Tibial artery (tissue), 4 donors: ENCODE measurements at regions of chr1 and their contacts with region 1.

Region 1: DNA sequence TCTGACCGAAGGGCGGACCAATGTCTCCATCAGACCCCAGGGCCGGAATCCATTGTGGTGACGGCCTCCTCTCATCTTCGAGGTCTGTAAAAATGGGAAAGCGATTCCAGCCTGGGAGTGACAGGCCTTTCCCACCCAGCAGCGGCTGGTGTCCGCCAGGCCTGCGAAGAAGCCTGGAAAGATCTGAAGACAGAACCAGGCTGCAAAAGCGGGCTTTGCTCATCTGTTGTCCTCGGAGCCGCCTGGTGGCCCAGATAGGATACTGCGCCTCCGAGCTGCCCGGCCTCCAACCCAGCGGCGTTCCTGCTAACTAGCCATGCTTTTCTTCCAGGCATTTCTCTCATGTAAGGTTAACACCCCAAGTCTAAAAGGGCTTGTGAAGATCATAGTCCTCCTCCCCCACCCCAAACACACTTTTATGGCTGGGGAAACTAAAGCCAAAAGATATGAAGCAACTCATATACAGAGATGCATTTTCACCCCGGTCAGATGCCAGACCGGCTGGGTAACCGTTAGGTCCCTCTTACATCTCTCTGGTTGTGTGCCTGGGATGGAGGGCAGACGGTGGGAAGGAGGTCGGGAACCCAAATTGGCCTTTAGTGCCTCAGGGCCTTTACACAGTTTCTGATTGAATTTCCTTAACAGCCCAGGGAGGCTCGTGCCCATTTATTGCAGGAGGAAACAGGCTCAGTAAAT is 1.9 kb upstream of the DHRS3 start:
- DNase-seq: peak; percentile 92 to 94
- H3K4me3 ChIP-seq: peak overlapping the region; percentile 85 to 92
- H3K27ac ChIP-seq: peak overlapping the region; percentile 99
- H3K4me1 ChIP-seq: peaks cover 10 to 62% (median 46%) of the 10 kb centered on the region in 4 donors
- H3K27me3 ChIP-seq: no peaks in the 10 kb centered on the region
- CTCF ChIP-seq: peak; percentile 96 to 98

Region 2: DNA sequence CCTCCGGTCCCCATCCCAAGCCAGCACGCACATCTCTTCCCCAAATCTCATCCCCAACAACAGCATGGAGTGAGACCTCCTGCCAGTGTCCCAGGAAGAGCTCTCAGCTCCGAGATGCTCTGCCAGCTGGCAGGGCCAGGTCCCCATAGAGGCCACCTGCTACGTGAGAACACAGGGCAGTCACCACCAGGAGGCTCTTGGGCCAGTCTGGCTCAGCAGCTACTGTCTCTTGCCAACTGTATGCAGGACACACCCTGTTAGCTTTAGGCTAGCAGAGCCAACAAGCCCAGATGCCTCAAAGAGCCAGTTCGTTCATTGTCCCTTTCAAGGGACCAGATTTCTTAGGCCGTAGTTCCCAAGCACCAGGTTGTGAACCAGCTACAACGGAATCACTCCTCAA is 1002.6 kb before region 1 on chr1:
- intact Hi-C with region 1: no loop called
- DNase-seq: no peak
- H3K4me3 ChIP-seq: no peak overlapping the region
- H3K27ac ChIP-seq: no peak overlapping the region
- H3K4me1 ChIP-seq: no peaks in the 10 kb centered on the region
- H3K27me3 ChIP-seq: peaks cover 0 to 71% of the 10 kb centered on the region in 2 donors
- CTCF ChIP-seq: no peak

Region 3: GRCh38 chr1:12404918-12405317 is 215.0 kb before region 1 on chr1:
- intact Hi-C with region 1: loop called (anchors 5 kb)
- DNase-seq: no peak
- H3K4me3 ChIP-seq: no peak overlapping the region
- H3K27ac ChIP-seq: peak overlapping the region; percentile 69 to 79
- H3K4me1 ChIP-seq: peaks cover 0 to 64% (median 41%) of the 10 kb centered on the region in 4 donors
- H3K27me3 ChIP-seq: no peaks in the 10 kb centered on the region
- CTCF ChIP-seq: no peak

Region 4: DNA sequence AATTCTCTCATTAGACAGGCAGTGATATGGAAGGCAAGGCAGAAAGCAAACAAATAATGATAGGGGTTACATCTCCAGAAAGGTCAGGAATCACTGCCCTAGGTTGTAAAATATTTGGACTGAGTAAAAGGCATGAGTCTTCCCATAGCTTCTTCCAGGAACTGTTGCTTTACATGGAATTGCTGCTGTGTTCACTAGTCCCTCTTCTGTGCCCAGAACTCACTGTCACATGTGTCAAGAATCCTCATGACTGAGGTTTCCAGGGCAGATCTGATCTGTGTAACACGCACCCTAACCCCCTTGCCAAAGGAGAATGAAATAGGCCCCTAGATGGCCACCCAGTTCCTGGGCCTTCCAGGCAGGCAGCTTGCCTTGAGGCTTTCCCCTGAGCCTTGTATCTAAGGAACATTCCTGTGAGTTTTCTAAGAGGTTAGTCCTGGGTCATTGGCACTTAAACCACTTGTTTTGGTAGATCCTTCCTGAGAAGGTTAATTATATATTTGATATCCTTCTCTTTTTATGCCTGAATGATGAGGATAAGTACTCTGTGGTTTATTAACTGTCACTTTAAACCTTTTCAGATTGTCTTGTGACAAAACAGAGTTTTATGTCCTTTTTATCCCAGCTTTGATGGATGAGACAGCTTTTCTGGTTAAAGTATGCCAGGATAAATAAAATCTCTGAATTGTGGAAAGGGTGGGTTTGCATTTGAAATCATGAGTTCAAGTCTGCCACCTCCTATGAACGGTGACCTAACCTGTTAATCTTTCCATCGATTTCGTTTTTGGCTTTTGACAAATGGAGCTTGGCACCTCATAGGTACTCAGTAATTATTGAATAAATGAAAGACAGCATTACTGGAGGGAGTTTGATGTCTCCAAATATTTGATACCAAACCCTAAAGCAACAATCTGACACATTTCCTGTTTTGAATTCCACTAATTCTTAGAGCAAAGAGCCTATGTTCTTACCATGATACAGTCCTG is 165.2 kb before region 1 on chr1:
- intact Hi-C with region 1: loop called (anchors 10 kb)
- DNase-seq: peak; percentile 85 to 90
- H3K4me3 ChIP-seq: no peak overlapping the region
- H3K27ac ChIP-seq: peak overlapping the region; percentile 78 to 86
- H3K4me1 ChIP-seq: peaks cover 14 to 96% (median 82%) of the 10 kb centered on the region in 4 donors
- H3K27me3 ChIP-seq: no peaks in the 10 kb centered on the region
- CTCF ChIP-seq: peak in 1 of 2 experiments; percentile 14

Region 5: DNA sequence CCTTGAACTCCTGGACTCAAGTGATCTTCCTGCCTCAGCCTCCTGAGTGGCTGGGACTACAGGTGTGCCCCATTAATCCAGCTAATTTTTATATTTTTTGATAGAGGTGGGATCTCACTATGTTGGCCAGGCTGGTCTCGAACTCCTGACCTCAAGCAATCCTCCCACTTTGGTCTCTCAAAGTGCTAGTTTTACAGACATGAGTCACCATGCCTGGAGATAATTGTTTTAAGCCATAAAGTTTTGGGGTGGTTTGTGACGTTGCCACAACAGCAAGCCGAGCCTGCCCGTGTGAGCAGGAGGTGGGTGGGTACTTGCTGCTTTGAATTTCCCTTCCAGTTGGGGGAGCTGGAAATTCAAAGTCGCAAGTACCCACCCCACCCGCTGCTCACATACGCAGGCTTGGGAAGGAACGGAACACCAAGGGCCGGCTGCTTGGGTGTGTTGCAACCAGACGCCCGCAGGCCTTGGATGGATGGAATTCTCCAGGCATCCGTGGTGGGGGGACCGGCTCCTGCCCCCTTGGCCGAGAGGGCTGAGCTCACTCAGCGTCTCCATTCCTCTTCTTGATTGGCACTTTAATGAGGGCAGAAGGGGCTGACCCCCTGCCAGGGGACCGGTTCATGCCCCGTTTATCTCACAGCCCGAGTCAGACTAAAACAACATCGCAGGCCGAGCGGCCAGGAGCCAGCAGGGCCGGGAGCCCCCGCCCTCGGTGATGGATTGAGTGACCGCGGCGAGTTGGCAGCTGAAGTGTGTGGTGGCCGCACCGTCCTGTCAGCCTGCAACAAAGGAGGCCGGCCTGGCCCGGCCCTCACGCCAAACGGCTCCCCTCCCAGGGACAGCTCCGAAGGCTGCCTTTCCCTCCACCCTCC is 80.0 kb before region 1 on chr1:
- intact Hi-C with region 1: loop called (anchors 5 kb)
- DNase-seq: peak; percentile 93 to 97
- H3K4me3 ChIP-seq: peak overlapping the region; percentile 4 to 26
- H3K27ac ChIP-seq: peak overlapping the region; percentile 79 to 80
- H3K4me1 ChIP-seq: peaks cover 0 to 41% (median 28%) of the 10 kb centered on the region in 4 donors
- H3K27me3 ChIP-seq: no peaks in the 10 kb centered on the region
- CTCF ChIP-seq: peak; percentile 14 to 30